ENCODE measurements at regions of chr7 and their contacts with region 1.

Region 1: DNA sequence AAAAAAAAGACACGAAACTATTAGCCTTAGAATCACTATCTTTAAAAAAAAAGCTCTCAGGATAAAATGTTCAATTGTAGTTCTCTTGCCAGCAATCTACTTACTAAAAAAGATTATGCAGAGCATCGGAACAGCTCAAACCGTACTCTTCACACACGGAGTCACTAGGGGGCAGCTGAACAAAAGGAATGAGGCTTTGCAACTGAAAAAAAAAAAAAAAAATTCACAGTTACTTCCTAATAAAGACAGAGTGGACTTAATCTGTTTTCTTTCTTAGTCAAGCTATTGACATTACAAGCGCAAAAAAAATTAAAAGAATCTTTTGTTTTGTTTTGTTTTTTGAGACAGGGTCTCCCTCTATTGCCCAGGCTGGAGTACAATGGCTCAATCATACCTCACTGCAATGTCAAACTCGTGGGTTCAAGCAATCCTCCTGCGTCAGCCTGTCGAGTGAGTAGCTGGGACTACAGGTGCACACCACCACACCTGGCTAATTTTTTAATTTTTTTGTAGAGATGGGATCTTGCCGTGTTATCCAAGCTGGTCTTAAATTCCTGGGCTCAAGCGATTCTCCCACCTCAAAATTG is 11.5 kb downstream of the PMS2 start:
- DNase-seq: peak; percentile 75
- H3K4me3 ChIP-seq: no peak overlapping the region
- H3K27ac ChIP-seq: no peak overlapping the region
- H3K4me1 ChIP-seq: no peaks in the 10 kb centered on the region
- CTCF ChIP-seq: peak; percentile 91

Region 2: DNA sequence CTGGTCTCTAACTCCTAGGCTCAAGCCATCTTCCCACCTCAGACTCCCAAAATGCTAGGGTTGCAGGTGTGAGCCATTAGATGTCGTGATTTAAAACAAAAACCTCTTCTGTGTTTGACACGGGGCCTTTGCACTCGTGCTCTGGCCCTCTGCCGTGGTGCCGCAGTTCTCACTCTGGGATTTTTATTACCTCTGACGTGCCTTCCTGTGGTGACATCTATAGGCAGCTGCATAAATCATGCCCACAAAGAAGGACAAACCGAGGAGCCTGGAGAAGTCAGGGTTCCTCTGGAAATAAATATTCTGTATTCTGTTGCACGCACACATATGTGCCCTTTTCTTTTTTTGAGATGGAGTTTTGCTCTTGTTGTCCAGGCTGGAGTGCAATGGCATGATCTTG is 142.6 kb before region 1 on chr7:
- CTCF ChIA-PET with region 1: no interaction called
- POLR2A ChIA-PET with region 1: interaction called, 4 read pairs
- intact Hi-C with region 1: loop called (anchors 10 kb)
- DNase-seq: no peak
- H3K4me3 ChIP-seq: no peak overlapping the region
- H3K27ac ChIP-seq: no peak overlapping the region
- H3K4me1 ChIP-seq: no peaks in the 10 kb centered on the region
- CTCF ChIP-seq: no peak

Region 3: DNA sequence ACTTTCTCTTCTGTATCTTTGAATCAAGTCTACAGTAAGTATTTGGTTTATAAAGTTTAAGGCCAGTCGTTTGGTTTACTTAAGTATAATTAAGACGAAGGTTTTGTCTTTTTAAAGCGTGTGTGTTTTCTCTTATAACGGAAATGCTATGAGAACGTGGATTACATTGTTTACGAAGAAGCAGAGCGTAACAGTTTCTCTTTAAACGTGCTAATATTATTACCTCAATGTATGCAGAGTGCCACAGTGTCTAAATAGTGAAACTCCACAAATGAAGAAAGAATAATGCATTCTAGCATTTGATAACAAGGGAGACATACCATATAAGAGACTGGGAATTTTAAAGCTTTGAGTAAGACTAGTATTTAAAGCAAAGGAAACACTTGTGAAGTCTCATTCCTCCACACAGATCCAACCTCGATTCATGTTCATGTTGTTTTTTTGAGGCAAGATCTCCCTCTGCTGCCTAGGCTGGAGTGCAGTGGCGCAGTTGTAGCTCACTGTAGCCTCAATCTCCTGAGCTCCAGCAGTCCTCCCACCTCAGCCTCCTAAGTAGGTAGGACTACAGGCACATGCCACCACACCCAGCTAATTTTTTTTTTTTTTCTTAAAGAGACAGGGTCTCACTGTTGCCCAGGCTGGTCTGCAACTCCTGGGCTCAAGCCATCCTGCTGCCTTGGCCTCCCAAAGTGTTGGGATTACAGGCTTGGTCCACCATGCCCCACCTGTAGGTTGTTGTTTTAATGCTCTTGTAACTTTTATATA is 109.0 kb after region 1 on chr7:
- CTCF ChIA-PET with region 1: interaction called, 4 read pairs
- POLR2A ChIA-PET with region 1: interaction called, 3 read pairs
- intact Hi-C with region 1: loop called (anchors 1 kb)
- DNase-seq: peak; percentile 70
- H3K4me3 ChIP-seq: peak overlapping the region; percentile 92
- H3K27ac ChIP-seq: peak overlapping the region; percentile 40
- H3K4me1 ChIP-seq: peaks cover 23% of the 10 kb centered on the region
- CTCF ChIP-seq: peak; percentile 74

Region 4: GRCh38 chr7:6489612-6490011 is 492.3 kb after region 1 on chr7:
- CTCF ChIA-PET with region 1: no interaction called
- POLR2A ChIA-PET with region 1: no interaction called
- intact Hi-C with region 1: no loop called
- DNase-seq: peak; percentile 37
- H3K4me3 ChIP-seq: no peak overlapping the region
- H3K27ac ChIP-seq: no peak overlapping the region
- H3K4me1 ChIP-seq: peaks cover 2% of the 10 kb centered on the region
- CTCF ChIP-seq: peak; percentile 43; the same call in 1 of the 2 replicates

Measured in OCI-LY7 (cell line).